ENCODE measurements at regions of chr22 and their contacts with region 1.

Region 1: DNA sequence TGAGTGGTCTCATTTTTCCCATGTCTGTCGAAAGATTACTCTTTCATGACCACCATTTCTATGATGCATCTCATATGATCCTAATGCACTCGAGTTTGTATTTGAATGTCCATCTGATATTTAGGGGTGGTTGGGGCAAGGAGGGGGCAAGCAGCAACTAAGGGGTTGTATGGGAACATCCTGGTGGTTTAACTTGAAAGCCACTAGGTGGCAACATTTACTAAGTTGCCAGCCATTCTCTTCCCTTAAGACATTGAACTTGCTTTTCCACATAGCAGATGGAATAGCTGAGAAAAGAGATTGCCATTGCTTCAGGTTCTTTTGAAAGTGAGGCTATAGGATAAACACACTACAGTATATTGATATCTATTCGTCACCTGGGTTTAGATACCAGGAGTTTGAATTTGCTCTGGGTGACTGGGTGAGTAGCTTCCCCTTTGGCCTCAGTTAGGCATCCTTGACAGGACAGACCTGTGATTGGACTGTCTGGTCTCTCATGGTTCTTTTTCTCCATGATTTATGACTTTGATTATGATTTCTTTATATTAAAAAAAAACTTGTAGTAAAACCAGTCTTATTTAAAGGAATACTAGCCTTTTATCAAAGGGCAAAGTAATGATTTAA is 32.4 kb downstream of the NF2 start:
- DNase-seq: peak; percentile 65
- H3K4me3 Mint-ChIP-seq: no peak overlapping the region
- H3K27ac Mint-ChIP-seq: no peak overlapping the region
- H3K4me1 Mint-ChIP-seq: peaks cover 28% of the 10 kb centered on the region
- H3K27me3 Mint-ChIP-seq: no peaks in the 10 kb centered on the region

Region 2: GRCh38 chr22:29487426-29487986 is 148.3 kb before region 1 on chr22:
- intact Hi-C with region 1: no loop called
- DNase-seq: no peak
- H3K4me3 Mint-ChIP-seq: no peak overlapping the region
- H3K27ac Mint-ChIP-seq: no peak overlapping the region
- H3K4me1 Mint-ChIP-seq: no peaks in the 10 kb centered on the region
- H3K27me3 Mint-ChIP-seq: peaks cover 3% of the 10 kb centered on the region

Region 3: GRCh38 chr22:29555065-29555644 is 80.7 kb before region 1 on chr22:
- intact Hi-C with region 1: no loop called
- DNase-seq: no peak
- H3K4me3 Mint-ChIP-seq: peak overlapping the region; percentile 97
- H3K27ac Mint-ChIP-seq: peak overlapping the region; percentile 75
- H3K4me1 Mint-ChIP-seq: peaks cover 4% of the 10 kb centered on the region
- H3K27me3 Mint-ChIP-seq: no peaks in the 10 kb centered on the region

Region 4: DNA sequence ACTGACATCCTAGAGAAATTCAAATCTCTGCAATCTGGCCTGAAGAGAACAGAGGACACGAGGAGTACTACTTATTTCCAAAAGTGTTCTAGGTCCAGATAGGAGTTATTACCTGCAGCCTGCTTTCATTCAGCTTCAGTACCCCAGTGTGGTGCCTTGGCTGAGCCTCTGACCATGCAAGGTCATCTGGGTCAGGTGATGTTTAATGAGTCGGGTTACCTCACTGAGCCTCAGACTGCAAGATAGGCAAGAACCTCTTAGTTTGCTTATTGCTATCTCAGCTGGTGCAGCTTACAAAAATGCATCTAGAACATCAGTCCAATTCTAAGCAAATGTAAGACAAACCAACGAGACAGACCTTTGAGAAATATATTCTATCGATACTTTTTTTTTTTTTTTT is 41.9 kb before region 1 on chr22:
- intact Hi-C with region 1: loop called (anchors 5 kb)
- DNase-seq: no peak
- H3K4me3 Mint-ChIP-seq: no peak overlapping the region
- H3K27ac Mint-ChIP-seq: no peak overlapping the region
- H3K4me1 Mint-ChIP-seq: peaks cover 7% of the 10 kb centered on the region
- H3K27me3 Mint-ChIP-seq: no peaks in the 10 kb centered on the region

Region 5: DNA sequence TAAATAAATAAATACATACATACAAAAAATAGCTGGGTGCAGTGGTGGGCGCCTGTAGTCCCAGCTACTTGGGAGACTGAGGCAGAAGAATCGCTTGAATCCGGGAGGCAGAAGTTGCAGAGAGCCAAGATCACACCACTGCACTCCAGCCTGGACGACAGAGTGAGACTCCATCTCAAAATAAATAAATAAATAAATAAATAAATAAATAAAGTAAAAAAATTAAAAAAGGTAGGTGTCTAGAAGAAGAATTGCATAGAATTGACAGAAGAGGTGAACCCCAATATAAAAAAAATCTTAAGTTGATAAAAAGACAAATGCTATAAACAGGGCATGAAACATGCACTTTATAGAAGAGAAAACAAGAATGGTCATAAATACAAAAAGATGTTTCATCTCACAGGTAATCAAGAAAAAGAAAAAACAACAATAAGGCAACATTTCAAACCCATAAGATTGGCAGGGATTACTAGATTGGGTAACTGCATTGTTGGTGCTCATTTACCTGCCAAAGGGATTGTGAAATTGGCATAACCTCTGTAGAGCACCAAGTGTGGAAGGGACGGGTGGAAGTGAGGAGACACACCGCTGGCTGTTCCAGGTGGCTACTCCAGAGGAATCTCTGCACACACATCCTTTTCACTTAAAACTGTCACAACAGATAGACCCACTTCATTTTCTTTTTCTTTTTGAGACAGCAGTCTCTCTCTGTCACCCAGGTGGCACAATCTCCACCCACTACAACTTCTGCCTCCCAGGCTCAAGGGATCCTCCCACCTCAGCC is 12.3 kb after region 1 on chr22:
- intact Hi-C with region 1: no loop called
- DNase-seq: no peak
- H3K4me3 Mint-ChIP-seq: no peak overlapping the region
- H3K27ac Mint-ChIP-seq: no peak overlapping the region
- H3K4me1 Mint-ChIP-seq: peaks cover 1% of the 10 kb centered on the region
- H3K27me3 Mint-ChIP-seq: no peaks in the 10 kb centered on the region

Region 6: GRCh38 chr22:29670626-29671025 is 34.8 kb after region 1 on chr22:
- intact Hi-C with region 1: no loop called
- DNase-seq: no peak
- H3K4me3 Mint-ChIP-seq: no peak overlapping the region
- H3K27ac Mint-ChIP-seq: no peak overlapping the region
- H3K4me1 Mint-ChIP-seq: no peaks in the 10 kb centered on the region
- H3K27me3 Mint-ChIP-seq: no peaks in the 10 kb centered on the region

Measured in activated CD4-positive, alpha-beta T cell treated with anti-CD3 and anti-CD28 coated beads, Interleukin-2, amount 10 ng/mL, durations not matched to agents 24 days and 14 days (primary cell).